Endothelial cell of umbilical vein (primary cell): ENCODE measurements at regions of chr17 and their contacts with region 1.

Region 1: GRCh38 chr17:42760652-42761581 is at the start of gene RAMP2:
- DNase-seq: peak; percentile 28
- H3K4me3 ChIP-seq: peak within 1 kb of the TSS; percentile 10 to 67 (median 14)
- H3K27ac ChIP-seq: no peak within 1 kb of the TSS
- H3K4me1 ChIP-seq: peaks cover 39% of the 10 kb centered on the region
- H3K27me3 ChIP-seq: peaks cover 0 to 3% of the 10 kb centered on the region in 2 experiments
- CTCF ChIP-seq: no peak
- POLR2A ChIP-seq: no peak
- total RNA-seq, gene RAMP2: 71.0 and 106 TPM in 2 replicates

Region 2: GRCh38 chr17:42135664-42136653 is 625.0 kb before region 1 on chr17:
- CTCF ChIA-PET with region 1: no interaction called
- POLR2A ChIA-PET with region 1: no interaction called
- dilution Hi-C with region 1: no loop called
- intact Hi-C with region 1: no loop called
- DNase-seq: peak; percentile 90
- H3K4me3 ChIP-seq: peak overlapping the region in 1 of 3 experiments; percentile 10
- H3K27ac ChIP-seq: peak overlapping the region; percentile 45
- H3K4me1 ChIP-seq: peaks cover 60% of the 10 kb centered on the region
- H3K27me3 ChIP-seq: no peaks in the 10 kb centered on the region
- CTCF ChIP-seq: no peak
- POLR2A ChIP-seq: peak; percentile 23

Region 3: DNA sequence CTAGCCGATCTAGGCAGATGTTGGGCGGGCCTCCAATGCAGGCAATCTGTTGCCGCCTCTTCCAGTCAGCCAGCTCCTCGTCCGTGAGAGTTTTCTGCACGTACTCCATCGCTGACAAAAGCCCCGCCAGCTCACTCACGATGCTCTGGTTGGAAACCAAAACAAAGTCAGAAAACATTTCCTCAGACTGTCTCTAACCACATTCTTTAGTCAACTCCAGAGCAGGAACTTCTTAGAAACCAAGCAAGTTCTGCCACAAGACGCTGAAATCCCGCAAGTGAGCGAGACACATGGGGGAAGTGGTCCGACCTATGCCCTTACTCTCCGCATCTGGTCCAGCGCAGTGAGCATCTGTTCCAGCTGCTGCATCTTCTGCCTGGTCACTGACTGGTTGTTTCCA is 423.5 kb before region 1 on chr17:
- CTCF ChIA-PET with region 1: no interaction called
- POLR2A ChIA-PET with region 1: no interaction called
- dilution Hi-C with region 1: no loop called
- intact Hi-C with region 1: no loop called
- DNase-seq: no peak
- H3K4me3 ChIP-seq: no peak overlapping the region
- H3K27ac ChIP-seq: no peak overlapping the region
- H3K4me1 ChIP-seq: peaks cover 14% of the 10 kb centered on the region
- H3K27me3 ChIP-seq: no peaks in the 10 kb centered on the region
- CTCF ChIP-seq: no peak
- POLR2A ChIP-seq: no peak

Region 4: GRCh38 chr17:42720996-42721583 is 39.8 kb before region 1 on chr17:
- CTCF ChIA-PET with region 1: interaction called, 35 read pairs
- POLR2A ChIA-PET with region 1: no interaction called
- dilution Hi-C with region 1: no loop called
- intact Hi-C with region 1: loop called (anchors 1 kb)
- DNase-seq: peak; percentile 73
- H3K4me3 ChIP-seq: no peak overlapping the region
- H3K27ac ChIP-seq: no peak overlapping the region
- H3K4me1 ChIP-seq: no peaks in the 10 kb centered on the region
- H3K27me3 ChIP-seq: no peaks in the 10 kb centered on the region
- CTCF ChIP-seq: peak; percentile 47 to 52
- POLR2A ChIP-seq: no peak

Region 5: GRCh38 chr17:42744806-42745617 is 15.9 kb before region 1 on chr17 and contains the start of gene EZH1:
- CTCF ChIA-PET with region 1: interaction called, 55 read pairs
- POLR2A ChIA-PET with region 1: no interaction called
- dilution Hi-C with region 1: no loop called
- intact Hi-C with region 1: loop called (anchors 1 kb)
- DNase-seq: peak; percentile 96
- H3K4me3 ChIP-seq: peak within 1 kb of the TSS; percentile 43 to 72 (median 53)
- H3K27ac ChIP-seq: peak within 1 kb of the TSS; percentile 65
- H3K4me1 ChIP-seq: peaks cover 10% of the 10 kb centered on the region
- H3K27me3 ChIP-seq: no peaks in the 10 kb centered on the region
- CTCF ChIP-seq: no peak
- POLR2A ChIP-seq: peak; percentile 58
- total RNA-seq, gene EZH1: 29.8 and 31.4 TPM in 2 replicates

Region 6: GRCh38 chr17:42773290-42774035 is 12.5 kb after region 1 on chr17 and contains the start of gene VPS25:
- CTCF ChIA-PET with region 1: interaction called, 53 read pairs
- POLR2A ChIA-PET with region 1: interaction called, 6 read pairs
- dilution Hi-C with region 1: no loop called
- intact Hi-C with region 1: loop called (anchors 1 kb)
- DNase-seq: peak; percentile 61
- H3K4me3 ChIP-seq: peak within 1 kb of the TSS; percentile 15 to 71 (median 68)
- H3K27ac ChIP-seq: peak within 1 kb of the TSS; percentile 73
- H3K4me1 ChIP-seq: peaks cover 26% of the 10 kb centered on the region
- H3K27me3 ChIP-seq: no peaks in the 10 kb centered on the region
- CTCF ChIP-seq: peak in 1 of 2 donors; percentile 3
- POLR2A ChIP-seq: peak; percentile 93
- total RNA-seq, gene VPS25: 45.0 and 47.1 TPM in 2 replicates

Region 7: GRCh38 chr17:42779936-42780850 is 19.3 kb after region 1 on chr17 and contains the start of gene WNK4:
- CTCF ChIA-PET with region 1: interaction called, 53 read pairs
- POLR2A ChIA-PET with region 1: interaction called, 3 read pairs
- dilution Hi-C with region 1: no loop called
- intact Hi-C with region 1: no loop called
- DNase-seq: peak; percentile 23
- H3K4me3 ChIP-seq: peak within 1 kb of the TSS in 2 of 3 experiments; percentile 18 to 48
- H3K27ac ChIP-seq: no peak within 1 kb of the TSS
- H3K4me1 ChIP-seq: peaks cover 43% of the 10 kb centered on the region
- H3K27me3 ChIP-seq: peaks cover 7 to 9% of the 10 kb centered on the region in 2 experiments
- CTCF ChIP-seq: no peak
- POLR2A ChIP-seq: peak; percentile 55
- total RNA-seq, gene WNK4: 1.9 TPM in 2 replicates

Region 8: GRCh38 chr17:42798383-42799380 is 37.8 kb after region 1 on chr17 and contains the starts of genes CNTD1 and COA3:
- CTCF ChIA-PET with region 1: interaction called, 14 read pairs
- POLR2A ChIA-PET with region 1: no interaction called
- dilution Hi-C with region 1: no loop called
- intact Hi-C with region 1: no loop called
- DNase-seq: peak; percentile 89
- H3K4me3 ChIP-seq: peak within 1 kb of the TSS; percentile 16 to 76 (median 71)
- H3K27ac ChIP-seq: no peak within 1 kb of the TSS
- H3K4me1 ChIP-seq: peaks cover 11% of the 10 kb centered on the region
- H3K27me3 ChIP-seq: no peaks in the 10 kb centered on the region
- CTCF ChIP-seq: no peak
- POLR2A ChIP-seq: peak; percentile 84
- total RNA-seq, gene CNTD1: not detected in 2 replicates
- total RNA-seq, gene COA3: 56.6 and 57.5 TPM in 2 replicates

Region 9: DNA sequence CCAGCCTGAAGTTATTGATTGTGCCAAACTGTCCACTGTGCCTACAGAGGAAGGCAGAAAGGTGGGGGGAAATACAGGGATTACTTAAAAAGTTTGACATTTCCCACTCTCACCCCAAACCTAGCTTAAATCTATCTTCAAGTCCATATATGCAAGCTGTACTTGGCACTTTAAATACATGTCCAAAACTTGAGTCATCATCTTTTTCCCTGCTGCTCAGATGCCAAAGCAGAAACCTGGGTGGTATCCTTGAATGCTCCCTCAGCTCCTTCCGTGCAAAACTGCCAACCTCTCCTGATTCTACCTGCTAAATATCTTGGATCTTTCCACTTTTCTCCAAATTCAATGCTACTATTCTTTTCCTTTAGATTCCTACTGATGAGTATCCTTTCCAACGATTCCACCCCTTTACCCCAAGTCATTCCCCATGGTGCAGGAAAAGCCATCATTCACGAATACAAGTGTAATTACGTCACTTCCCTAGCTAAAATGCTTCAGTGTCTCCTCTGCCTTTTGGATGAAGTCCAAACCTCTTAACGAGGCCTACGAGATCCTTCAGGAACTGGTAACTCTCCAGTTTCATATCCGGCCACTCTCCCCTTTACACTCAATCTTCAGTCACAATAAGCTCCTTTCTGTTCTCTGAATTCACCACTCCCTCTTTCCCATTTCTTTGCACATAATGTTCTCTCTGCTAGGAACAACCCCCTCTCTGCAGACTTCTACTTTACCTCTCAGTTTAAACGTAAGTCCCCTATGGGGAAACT is 53.9 kb after region 1 on chr17:
- CTCF ChIA-PET with region 1: interaction called, 11 read pairs
- POLR2A ChIA-PET with region 1: no interaction called
- dilution Hi-C with region 1: no loop called
- intact Hi-C with region 1: no loop called
- DNase-seq: peak; percentile 63
- H3K4me3 ChIP-seq: no peak overlapping the region
- H3K27ac ChIP-seq: peak overlapping the region; percentile 41
- H3K4me1 ChIP-seq: peaks cover 20% of the 10 kb centered on the region
- H3K27me3 ChIP-seq: no peaks in the 10 kb centered on the region
- CTCF ChIP-seq: no peak
- POLR2A ChIP-seq: no peak